Posterior cingulate gyrus (tissue), 11 donors: ENCODE measurements at regions of chr12 and their contacts with region 1.

Region 1: DNA sequence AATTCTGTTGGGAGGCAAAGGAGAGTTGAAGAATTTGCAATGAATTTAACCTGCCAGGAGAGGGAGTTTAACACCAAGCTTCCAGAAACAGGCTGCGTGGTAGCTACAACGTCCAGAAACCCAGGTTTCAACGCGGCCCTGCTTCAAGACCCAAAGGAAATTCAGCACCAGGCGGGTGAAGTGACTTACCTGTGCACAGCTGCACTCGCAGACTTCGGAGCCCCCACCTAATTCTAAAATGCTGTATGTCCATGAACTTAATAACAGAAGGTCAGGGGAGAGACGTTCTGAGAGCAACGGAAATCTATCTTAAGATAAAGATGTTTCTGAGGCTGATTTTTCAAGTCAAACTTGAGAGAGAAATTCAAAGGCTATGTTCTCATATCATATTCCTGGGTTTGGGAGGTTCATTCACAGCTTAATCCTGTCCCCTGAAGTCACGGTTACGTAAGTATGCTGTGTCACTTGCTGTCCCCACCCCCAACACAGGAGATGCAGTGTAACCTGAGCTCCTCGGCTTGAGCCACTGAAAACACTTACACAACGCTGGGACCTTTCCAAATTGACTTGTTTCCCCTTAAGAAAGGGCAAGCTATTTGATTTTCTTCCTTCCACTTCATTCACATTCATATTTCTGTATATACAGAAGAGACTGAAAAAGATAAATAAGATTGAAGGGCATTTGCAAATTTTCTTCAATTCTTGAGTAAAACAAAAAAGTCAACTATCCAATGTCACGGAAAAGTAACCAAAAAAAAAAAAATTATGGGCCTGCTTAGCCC is 22.7 kb downstream of the CLIP1 start:
- DNase-seq: peak in 8 of 10 donors; percentile 29 to 89 (median 50)

Region 2: DNA sequence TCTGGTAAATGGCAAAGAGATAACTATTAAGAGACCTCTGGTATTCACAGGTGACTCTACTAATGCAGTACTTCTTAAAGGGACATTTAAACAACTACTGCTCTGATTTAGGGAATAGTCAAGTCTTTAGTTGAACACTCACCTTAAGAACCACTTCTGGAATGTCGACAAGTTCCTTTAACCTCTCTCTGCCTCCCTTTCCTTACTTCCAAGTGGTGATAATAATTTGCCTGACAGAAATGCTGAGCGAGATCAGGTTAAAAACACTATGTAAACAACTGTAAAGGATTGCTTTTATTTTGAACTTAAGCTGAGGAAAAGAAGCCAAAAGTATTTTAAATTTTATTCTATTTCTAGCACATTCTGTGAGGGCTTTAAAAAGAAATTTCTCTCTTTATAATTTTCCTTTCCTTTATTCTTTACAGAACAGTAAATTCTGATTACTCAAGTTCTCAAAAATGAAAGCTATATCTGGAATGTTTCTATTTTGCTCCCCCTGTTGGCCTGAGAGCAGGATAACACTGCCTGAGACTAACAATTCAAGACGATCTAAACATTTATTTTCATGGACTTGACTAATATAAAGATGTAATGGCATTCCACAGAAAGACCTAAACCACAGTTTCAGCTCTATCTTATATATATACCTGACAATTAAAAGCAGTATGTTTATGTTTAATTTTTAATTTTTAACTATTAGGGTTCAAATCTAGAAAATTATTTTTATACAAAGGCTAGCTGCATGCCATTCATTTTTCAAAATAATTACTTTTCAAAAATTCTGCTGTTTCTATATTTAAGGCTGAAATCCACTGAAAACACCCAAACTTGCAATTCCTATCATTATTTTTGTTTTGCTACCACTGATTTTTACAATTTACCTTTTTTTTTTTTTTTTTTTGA is 71.8 kb after region 1 on chr12:
- intact Hi-C with region 1: loop called (anchors 1 kb)
- DNase-seq: no peak